ENCODE measurements at regions of chr5 and their contacts with region 1.

Region 1: GRCh38 chr5:14871210-14872069 is at the start of gene ANKH:
- DNase-seq: peak; percentile 41 to 96
- H3K4me3 ChIP-seq: peak within 1 kb of the TSS; percentile 60
- H3K27ac ChIP-seq: no peak within 1 kb of the TSS
- H3K4me1 ChIP-seq: peaks cover 7% of the 10 kb centered on the region; the same call in 1 of the 2 replicates
- H3K27me3 ChIP-seq: no peaks in the 10 kb centered on the region
- CTCF ChIP-seq: no peak
- total RNA-seq, gene ANKH: 81.4 and 87.2 TPM in 2 replicates

Region 2: DNA sequence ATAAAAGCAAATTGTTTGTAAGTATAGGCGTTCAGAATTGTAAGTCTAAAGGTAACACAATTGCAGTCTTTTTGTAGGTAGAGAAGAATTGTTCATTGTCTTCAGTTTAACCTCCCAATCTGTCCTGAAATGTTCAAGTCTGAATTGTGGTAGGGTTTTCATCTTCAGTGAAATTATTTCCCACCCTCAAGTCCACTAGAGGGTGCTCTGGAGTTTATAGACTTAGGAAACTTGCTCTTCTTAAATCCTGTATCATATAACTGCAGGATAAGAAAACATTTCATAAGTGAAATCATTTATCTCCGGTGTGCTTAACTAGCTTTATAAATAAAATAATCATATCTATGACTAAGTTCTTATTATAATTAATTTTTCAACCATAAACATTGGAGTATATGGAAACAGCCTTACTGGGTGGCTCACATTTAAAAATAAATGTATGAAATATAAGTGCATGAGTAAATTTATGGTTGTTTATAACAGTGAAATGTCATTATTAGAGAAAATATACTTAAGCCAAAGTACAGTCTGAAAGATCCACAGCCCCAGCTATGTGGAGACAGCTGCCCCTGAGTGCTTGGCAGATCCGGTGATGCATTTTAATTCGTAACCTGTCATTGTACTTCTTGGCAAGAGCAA is 472.3 kb before region 1 on chr5:
- CTCF ChIA-PET with region 1: no interaction called
- POLR2A ChIA-PET with region 1: interaction called, 10 read pairs
- intact Hi-C with region 1: no loop called
- DNase-seq: peak in 1 of 2 experiments; percentile 46
- H3K4me3 ChIP-seq: no peak overlapping the region
- H3K27ac ChIP-seq: no peak overlapping the region
- H3K4me1 ChIP-seq: peaks cover 10% of the 10 kb centered on the region; the same call in 1 of the 2 replicates
- H3K27me3 ChIP-seq: no peaks in the 10 kb centered on the region
- CTCF ChIP-seq: peak; percentile 83

Region 3: DNA sequence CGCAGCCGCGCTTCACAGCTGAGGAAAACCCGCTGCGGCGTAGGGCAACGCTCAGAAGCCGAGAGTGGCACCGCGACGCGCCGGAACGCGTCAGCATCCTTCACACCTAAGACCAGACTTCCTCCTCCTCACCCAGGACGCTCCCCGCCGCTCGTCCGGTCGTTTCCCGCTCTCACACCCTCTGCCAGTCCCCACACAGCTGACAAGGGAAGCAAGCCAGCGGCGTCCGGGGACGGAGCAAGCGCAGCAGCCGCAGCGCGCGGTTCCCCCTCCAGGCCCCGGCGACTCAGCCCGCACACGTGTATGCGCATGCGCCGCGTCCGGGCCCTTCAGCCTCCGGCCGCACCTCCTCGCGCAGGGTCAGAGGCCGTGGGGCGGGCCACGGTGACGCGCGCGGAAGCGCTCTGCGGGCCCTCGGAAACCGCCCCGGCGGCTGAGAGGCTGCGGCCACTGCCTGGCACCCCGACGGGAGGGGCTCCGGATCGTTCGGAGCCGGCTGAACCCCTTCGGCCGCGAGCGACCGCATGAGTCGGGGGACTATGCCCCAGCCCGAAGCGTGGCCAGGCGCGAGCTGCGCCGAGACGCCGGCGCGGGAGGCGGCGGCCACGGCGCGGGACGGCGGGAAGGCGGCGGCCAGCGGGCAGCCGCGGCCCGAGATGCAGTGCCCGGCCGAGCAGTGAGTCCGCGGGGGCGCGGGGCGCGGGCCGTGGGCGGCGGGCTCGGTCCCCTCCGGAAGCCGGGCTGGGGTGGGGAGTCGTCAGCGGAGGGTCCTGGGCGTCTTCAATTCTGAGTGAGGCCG is 206.9 kb before region 1 on chr5 and contains the start of gene OTULIN:
- CTCF ChIA-PET with region 1: no interaction called
- POLR2A ChIA-PET with region 1: no interaction called
- intact Hi-C with region 1: loop called (anchors 1 kb)
- DNase-seq: peak; percentile 71 to 98
- H3K4me3 ChIP-seq: peak within 1 kb of the TSS; percentile 73
- H3K27ac ChIP-seq: peak within 1 kb of the TSS; percentile 21
- H3K4me1 ChIP-seq: peaks cover 28% of the 10 kb centered on the region
- H3K27me3 ChIP-seq: no peaks in the 10 kb centered on the region
- CTCF ChIP-seq: no peak
- total RNA-seq, gene OTULIN: 77.2 and 79.1 TPM in 2 replicates

Region 4: DNA sequence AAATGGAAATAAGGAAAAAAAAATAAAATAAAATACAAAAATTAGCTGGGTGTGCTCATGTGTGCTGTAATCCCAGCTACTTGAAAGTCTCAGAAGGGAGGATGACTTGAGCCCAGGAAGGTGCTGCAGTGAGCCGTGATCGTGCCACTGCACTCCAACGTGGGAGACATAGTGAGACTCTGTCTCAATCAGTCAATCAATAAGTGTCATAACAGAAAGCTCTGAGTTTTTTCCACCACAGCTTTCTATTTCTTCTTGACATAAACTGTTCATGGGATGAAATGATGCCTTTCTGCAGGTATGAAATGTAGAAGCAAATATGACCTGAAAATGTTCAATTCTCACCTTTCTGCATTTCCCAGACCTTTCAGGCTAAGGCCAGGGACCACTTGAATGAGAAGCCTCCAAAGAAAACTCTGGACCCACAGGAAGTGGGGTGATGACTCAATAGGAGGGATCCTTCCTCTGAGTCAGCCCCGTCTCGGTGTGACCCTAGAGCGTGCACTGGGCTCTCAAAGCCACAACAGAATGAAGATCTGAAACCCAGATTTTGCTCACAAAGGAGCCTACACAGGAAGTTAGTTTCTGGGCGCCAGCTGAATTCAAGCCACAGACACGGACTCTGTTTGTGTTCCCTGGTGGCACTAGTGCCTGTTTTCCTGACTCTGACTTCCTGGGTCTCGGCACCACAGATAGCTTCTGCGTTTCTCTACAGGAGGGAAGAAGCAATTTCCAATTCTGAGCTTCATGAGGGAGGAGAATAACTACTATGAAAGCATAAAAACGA is 61.9 kb before region 1 on chr5:
- CTCF ChIA-PET with region 1: interaction called, 4 read pairs
- POLR2A ChIA-PET with region 1: no interaction called
- intact Hi-C with region 1: loop called (anchors 1 kb)
- DNase-seq: peak; percentile 69 to 86
- H3K4me3 ChIP-seq: 0 out of 2 replicates have a peak overlapping the region, but pooled peaks have one; percentile 2
- H3K27ac ChIP-seq: peak overlapping the region; percentile 73
- H3K4me1 ChIP-seq: peaks cover 20% of the 10 kb centered on the region
- H3K27me3 ChIP-seq: no peaks in the 10 kb centered on the region
- CTCF ChIP-seq: no peak

Region 5: DNA sequence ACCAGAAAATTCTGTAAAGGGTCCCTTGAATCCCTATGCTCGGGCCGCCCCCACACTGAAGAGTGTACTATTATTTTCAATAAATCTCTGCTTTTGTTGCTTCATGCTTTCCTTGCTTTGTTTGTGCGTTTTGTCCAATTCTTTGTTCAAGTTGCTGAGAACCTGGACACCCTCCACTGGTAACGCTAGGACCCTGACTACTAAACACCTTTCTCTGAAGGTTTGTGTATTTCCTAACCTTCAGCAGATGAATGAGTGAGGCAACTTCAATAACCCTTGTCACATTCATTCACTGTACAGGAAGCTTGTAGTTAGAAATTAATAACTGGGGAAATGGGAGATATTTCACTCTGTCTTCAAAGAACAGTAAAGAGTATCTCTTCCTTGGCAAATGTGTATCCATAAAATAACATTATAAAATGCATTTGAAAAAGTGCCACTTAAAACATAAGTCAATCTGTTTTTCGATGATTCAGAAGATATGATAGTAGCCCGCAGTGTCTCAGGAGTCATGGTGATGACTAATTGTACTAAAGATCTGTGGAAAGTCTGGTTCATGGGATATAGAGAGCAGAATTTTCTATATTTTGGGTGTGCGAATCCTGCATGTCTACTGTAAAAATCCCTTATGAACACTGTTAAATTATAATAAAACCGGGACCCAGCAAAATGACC is 43.3 kb after region 1 on chr5:
- CTCF ChIA-PET with region 1: no interaction called
- POLR2A ChIA-PET with region 1: no interaction called
- intact Hi-C with region 1: no loop called
- DNase-seq: no peak
- H3K4me3 ChIP-seq: no peak overlapping the region
- H3K27ac ChIP-seq: no peak overlapping the region
- H3K4me1 ChIP-seq: no peaks in the 10 kb centered on the region
- H3K27me3 ChIP-seq: peaks cover 37% of the 10 kb centered on the region
- CTCF ChIP-seq: no peak

Region 6: DNA sequence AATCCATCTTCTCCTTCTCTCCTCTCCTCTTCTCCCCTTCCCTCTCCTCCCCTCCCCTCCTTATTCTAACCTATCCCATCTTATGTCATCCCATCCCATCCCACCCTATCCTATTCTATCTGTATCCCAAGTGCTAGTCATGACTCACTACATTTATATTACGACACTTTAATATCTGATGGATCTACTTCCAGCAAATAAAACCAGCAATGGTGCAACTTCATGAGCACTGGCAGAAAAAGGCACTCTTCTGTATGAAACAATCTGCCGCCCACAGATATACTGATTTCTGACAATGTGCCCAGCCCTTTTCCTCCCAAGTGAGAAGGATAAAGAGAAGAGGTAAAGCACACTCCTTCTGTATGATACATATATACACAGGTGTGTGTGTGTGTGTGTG is 86.8 kb after region 1 on chr5:
- CTCF ChIA-PET with region 1: no interaction called
- POLR2A ChIA-PET with region 1: no interaction called
- intact Hi-C with region 1: loop called (anchors 5 kb)
- DNase-seq: no peak
- H3K4me3 ChIP-seq: no peak overlapping the region
- H3K27ac ChIP-seq: no peak overlapping the region
- H3K4me1 ChIP-seq: peaks cover 8% of the 10 kb centered on the region; the same call in 1 of the 2 replicates
- H3K27me3 ChIP-seq: peaks cover 4% of the 10 kb centered on the region
- CTCF ChIP-seq: no peak